ENCODE measurements at regions of chr21 and their contacts with region 1.

Region 1: GRCh38 chr21:42818328-42818749 is 61.0 kb downstream of the WDR4 start:
- DNase-seq: peak; percentile 33
- ATAC-seq: peak; percentile 100
- H3K4me3 ChIP-seq: no peak overlapping the region
- H3K27ac ChIP-seq: no peak overlapping the region
- H3K4me1 ChIP-seq: no peaks in the 10 kb centered on the region
- H3K27me3 ChIP-seq: no peaks in the 10 kb centered on the region
- CTCF ChIP-seq: peak; percentile 81 to 87 (median 86); a peak in 5 of 6 replicates
- POLR2A ChIP-seq: no peak
- RAD21 ChIP-seq: peak; percentile 83

Region 2: GRCh38 chr21:42593007-42593806 is 225.1 kb before region 1 on chr21:
- CTCF ChIA-PET with region 1: interaction called, 28 read pairs
- POLR2A ChIA-PET with region 1: no interaction called
- RAD21 ChIA-PET with region 1: interaction called in 1 of 2 experiments, 4 read pairs
- intact Hi-C with region 1: loop called (anchors 1 kb)
- DNase-seq: peak; percentile 42
- ATAC-seq: peak; percentile 100
- H3K4me3 ChIP-seq: no peak overlapping the region
- H3K27ac ChIP-seq: no peak overlapping the region
- H3K4me1 ChIP-seq: peaks cover 3 to 9% of the 10 kb centered on the region in 2 experiments; a peak in 2 of 4 replicates
- H3K27me3 ChIP-seq: no peaks in the 10 kb centered on the region
- CTCF ChIP-seq: peak; percentile 67 to 82 (median 75)
- POLR2A ChIP-seq: no peak
- RAD21 ChIP-seq: peak; percentile 87

Region 3: GRCh38 chr21:42652527-42653230 is 165.7 kb before region 1 on chr21:
- CTCF ChIA-PET with region 1: no interaction called
- POLR2A ChIA-PET with region 1: no interaction called
- RAD21 ChIA-PET with region 1: no interaction called
- intact Hi-C with region 1: loop called (anchors 5 kb)
- DNase-seq: no peak
- ATAC-seq: peak; percentile 44
- H3K4me3 ChIP-seq: no peak overlapping the region
- H3K27ac ChIP-seq: no peak overlapping the region; the same call in 1 of the 2 replicates
- H3K4me1 ChIP-seq: peaks cover 18 to 33% of the 10 kb centered on the region in 2 experiments; a peak in 3 of 4 replicates
- H3K27me3 ChIP-seq: no peaks in the 10 kb centered on the region
- CTCF ChIP-seq: peak in 2 of 3 experiments; percentile 30 to 45; a peak in 3 of 6 replicates
- POLR2A ChIP-seq: no peak
- RAD21 ChIP-seq: no peak